ENCODE measurements at regions of chr21 and their contacts with region 1.

Region 1: GRCh38 chr21:25895565-25896205 is 160.9 kb downstream of the GABPA start:
- DNase-seq: peak; percentile 37
- H3K4me3 Mint-ChIP-seq: no peak overlapping the region
- H3K27ac Mint-ChIP-seq: no peak overlapping the region
- H3K4me1 Mint-ChIP-seq: peaks cover 6% of the 10 kb centered on the region
- H3K27me3 Mint-ChIP-seq: no peaks in the 10 kb centered on the region

Region 2: DNA sequence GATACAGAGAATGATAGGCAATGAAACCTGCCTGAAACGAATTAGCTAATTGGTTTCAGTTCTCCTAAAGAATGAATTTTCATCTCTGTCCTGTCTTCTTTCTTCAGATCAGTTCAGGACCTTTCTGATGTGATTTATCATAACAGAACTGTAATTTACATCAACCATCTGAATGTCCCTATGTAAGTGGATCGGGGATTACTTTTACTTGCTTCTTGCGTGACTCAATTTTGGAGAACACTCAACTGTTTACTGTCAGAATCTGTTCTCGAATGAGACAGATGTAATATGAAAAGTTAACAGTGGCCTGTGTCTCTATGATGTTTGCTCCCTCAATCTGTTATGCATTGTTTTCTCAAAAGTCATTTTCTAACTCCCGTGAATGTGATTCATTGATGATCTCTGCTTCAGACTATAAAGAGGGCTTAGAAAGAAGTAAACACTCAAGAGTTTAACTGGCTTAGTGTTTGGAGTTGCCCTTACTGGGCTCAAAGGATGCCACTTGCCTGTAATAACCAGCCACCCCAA is 49.9 kb before region 1 on chr21:
- CTCF ChIA-PET with region 1: no interaction called
- intact Hi-C with region 1: no loop called
- DNase-seq: no peak
- H3K4me3 Mint-ChIP-seq: no peak overlapping the region
- H3K27ac Mint-ChIP-seq: no peak overlapping the region
- H3K4me1 Mint-ChIP-seq: no peaks in the 10 kb centered on the region
- H3K27me3 Mint-ChIP-seq: peaks cover 4% of the 10 kb centered on the region

Region 3: GRCh38 chr21:25999921-26000582 is 104.4 kb after region 1 on chr21:
- CTCF ChIA-PET with region 1: no interaction called
- intact Hi-C with region 1: loop called (anchors 5 kb)
- DNase-seq: peak; percentile 65
- H3K4me3 Mint-ChIP-seq: peak overlapping the region; percentile 28
- H3K27ac Mint-ChIP-seq: no peak overlapping the region
- H3K4me1 Mint-ChIP-seq: peaks cover 3% of the 10 kb centered on the region
- H3K27me3 Mint-ChIP-seq: no peaks in the 10 kb centered on the region

Region 4: DNA sequence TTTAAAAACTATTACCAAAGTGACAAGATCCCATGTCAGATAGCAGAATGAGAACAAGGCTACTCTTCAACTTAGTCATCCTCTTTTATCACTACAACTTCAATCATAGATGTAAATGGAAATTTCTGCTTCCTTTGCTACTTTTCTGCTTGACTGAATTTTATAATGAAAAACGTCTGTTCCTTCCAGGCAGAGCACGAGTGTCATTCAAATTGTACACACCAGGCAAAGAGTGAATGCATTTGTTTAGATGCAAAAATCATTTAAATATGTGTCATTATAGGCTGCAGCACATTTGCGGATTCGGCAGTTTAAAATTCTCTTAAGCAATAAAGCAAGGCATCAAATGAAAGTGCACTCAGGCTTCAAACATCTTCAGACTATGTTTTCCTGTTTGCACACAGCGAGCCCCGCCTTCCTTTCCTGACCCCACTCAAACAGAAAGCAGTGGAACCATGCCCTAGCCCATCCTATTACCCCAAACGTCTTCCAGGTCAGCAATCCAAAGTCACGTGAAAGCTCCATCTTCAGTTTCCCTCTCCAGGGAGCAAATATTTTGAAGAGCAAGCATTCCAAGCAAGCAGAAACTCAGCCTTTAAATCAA is 175.2 kb after region 1 on chr21:
- CTCF ChIA-PET with region 1: no interaction called
- intact Hi-C with region 1: loop called (anchors 5 kb)
- DNase-seq: peak; percentile 52
- H3K4me3 Mint-ChIP-seq: peak overlapping the region; percentile 69
- H3K27ac Mint-ChIP-seq: peak overlapping the region; percentile 70
- H3K4me1 Mint-ChIP-seq: peaks cover 52% of the 10 kb centered on the region
- H3K27me3 Mint-ChIP-seq: no peaks in the 10 kb centered on the region

Region 5: DNA sequence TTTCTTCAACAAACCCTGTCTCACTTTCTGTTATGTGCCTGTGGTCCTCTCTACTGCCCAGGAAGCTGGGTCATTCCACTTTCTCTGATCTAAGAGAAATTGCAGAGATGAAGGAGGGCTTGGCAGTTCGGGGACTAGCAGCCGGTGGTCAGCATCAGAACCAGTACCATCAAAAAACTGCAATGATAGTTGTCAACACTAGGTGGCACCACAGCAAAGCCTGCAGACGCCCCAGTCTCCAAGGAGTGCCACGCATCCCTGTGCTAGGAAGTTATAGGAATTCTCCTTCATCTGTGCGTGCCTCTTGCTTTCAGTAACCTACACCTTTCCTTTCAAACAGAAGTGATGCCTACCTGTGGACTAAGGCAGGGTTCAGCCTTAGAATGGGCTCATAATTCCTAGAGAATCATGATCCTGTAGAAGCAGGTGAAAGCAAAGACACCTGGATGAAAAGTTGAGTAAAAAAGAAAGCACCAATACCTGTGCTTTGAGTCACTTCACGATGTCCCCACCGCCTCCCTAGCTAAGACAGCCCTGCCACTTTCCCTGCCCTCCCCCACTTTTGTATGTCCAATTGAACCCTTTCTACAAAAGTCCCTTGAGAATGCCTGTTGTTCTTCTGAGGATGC is 820.3 kb after region 1 on chr21:
- CTCF ChIA-PET with region 1: interaction called, 3 read pairs
- intact Hi-C with region 1: loop called (anchors 1 kb)
- DNase-seq: peak; percentile 30
- H3K4me3 Mint-ChIP-seq: no peak overlapping the region
- H3K27ac Mint-ChIP-seq: no peak overlapping the region
- H3K4me1 Mint-ChIP-seq: no peaks in the 10 kb centered on the region
- H3K27me3 Mint-ChIP-seq: peaks cover 10% of the 10 kb centered on the region